GM12878 (cell line): ENCODE measurements at regions of chr12 and their contacts with region 1.

Region 1: GRCh38 chr12:1795785-1796514 is 24.4 kb upstream of the LRTM2 start:
- DNase-seq: peak; percentile 73
- ATAC-seq: peak; percentile 96
- H3K4me3 ChIP-seq: peak overlapping the region; percentile 62
- H3K27ac ChIP-seq: peak overlapping the region; percentile 62
- H3K4me1 ChIP-seq: peaks cover 7% of the 10 kb centered on the region
- H3K27me3 ChIP-seq: no peaks in the 10 kb centered on the region
- CTCF ChIP-seq: peak; percentile 81 to 97 (median 92); a peak in 5 of 6 replicates
- EP300 ChIP-seq: no peak
- POLR2A ChIP-seq: peak; percentile 90
- RAD21 ChIP-seq: peak; percentile 78

Region 2: GRCh38 chr12:1661553-1662335 is 134.2 kb before region 1 on chr12:
- CTCF ChIA-PET with region 1: interaction called, 434 read pairs
- POLR2A ChIA-PET with region 1: no interaction called
- RAD21 ChIA-PET with region 1: interaction called, 234 read pairs
- SMC1A ChIA-PET with region 1: interaction called, 9 read pairs
- in situ Hi-C with region 1: no loop called
- intact Hi-C with region 1: no loop called
- DNase-seq: peak; percentile 43
- ATAC-seq: peak; percentile 96
- H3K4me3 ChIP-seq: peak overlapping the region; percentile 67; the same call in 1 of the 2 replicates
- H3K27ac ChIP-seq: no peak overlapping the region
- H3K4me1 ChIP-seq: no peaks in the 10 kb centered on the region
- H3K27me3 ChIP-seq: no peaks in the 10 kb centered on the region
- CTCF ChIP-seq: no peak
- EP300 ChIP-seq: no peak
- POLR2A ChIP-seq: peak; percentile 80
- RAD21 ChIP-seq: no peak

Region 3: GRCh38 chr12:1698638-1699214 is 97.2 kb before region 1 on chr12:
- CTCF ChIA-PET with region 1: interaction called, 37 read pairs
- POLR2A ChIA-PET with region 1: no interaction called
- RAD21 ChIA-PET with region 1: interaction called, 16 read pairs
- SMC1A ChIA-PET with region 1: interaction called, 32 read pairs
- in situ Hi-C with region 1: no loop called
- intact Hi-C with region 1: loop called (anchors 5 kb)
- DNase-seq: no peak
- ATAC-seq: 0 out of 3 replicates have a peak, but pooled peaks have one; percentile 11
- H3K4me3 ChIP-seq: no peak overlapping the region
- H3K27ac ChIP-seq: no peak overlapping the region
- H3K4me1 ChIP-seq: no peaks in the 10 kb centered on the region
- H3K27me3 ChIP-seq: no peaks in the 10 kb centered on the region
- CTCF ChIP-seq: peak in 1 of 3 experiments; percentile 24; a peak in 1 of 6 replicates
- EP300 ChIP-seq: no peak
- POLR2A ChIP-seq: no peak
- RAD21 ChIP-seq: 0 out of 2 replicates have a peak, but pooled peaks have one; percentile 1

Region 4: DNA sequence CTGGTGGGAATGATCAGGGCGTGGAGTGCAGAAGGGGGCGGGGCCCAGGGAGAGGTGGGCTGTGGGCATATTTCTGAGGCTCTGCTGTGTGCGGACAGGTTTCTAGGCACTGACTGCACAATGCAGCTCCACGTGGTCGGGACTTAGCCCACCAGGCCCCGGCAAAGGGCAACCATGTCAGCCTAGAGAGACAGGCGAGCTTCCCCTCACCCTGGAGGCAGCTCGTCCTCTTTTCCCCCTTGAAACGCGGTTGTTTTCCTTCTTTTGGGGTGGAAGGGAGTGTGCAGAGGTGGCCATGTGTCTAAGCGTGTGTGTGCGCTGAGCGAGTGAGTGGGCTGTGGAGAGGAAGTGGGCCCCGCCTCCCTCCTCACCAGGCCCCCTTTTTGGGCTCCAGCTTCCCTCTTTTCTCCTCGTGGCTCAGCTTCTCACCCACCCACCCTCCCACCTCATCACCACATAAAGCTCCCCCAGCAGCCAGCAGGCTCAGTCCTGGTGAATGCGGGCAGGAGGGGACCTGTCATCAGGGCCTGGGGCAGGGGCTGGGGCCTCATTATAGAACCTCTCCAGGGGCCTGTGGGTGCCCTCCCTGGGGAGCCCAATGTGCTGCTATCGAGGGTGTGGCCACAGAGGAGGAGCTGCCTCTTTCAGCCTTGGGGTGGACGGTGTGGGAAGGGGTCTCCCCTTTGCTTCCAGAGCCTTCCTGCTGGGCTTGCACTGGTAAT is 46.4 kb after region 1 on chr12:
- CTCF ChIA-PET with region 1: no interaction called
- POLR2A ChIA-PET with region 1: no interaction called
- RAD21 ChIA-PET with region 1: no interaction called
- SMC1A ChIA-PET with region 1: no interaction called
- in situ Hi-C with region 1: no loop called
- intact Hi-C with region 1: no loop called
- DNase-seq: no peak
- ATAC-seq: no peak
- H3K4me3 ChIP-seq: no peak overlapping the region
- H3K27ac ChIP-seq: no peak overlapping the region
- H3K4me1 ChIP-seq: no peaks in the 10 kb centered on the region
- H3K27me3 ChIP-seq: peaks cover 3 to 7% of the 10 kb centered on the region in 2 experiments
- CTCF ChIP-seq: no peak
- EP300 ChIP-seq: no peak
- POLR2A ChIP-seq: no peak
- RAD21 ChIP-seq: no peak

Region 5: GRCh38 chr12:1932264-1932777 is 136.4 kb after region 1 on chr12:
- CTCF ChIA-PET with region 1: interaction called, 3 read pairs
- POLR2A ChIA-PET with region 1: no interaction called
- RAD21 ChIA-PET with region 1: interaction called, 4 read pairs
- SMC1A ChIA-PET with region 1: interaction called, 109 read pairs
- in situ Hi-C with region 1: loop called (anchors 5 kb)
- intact Hi-C with region 1: loop called (anchors 2 kb)
- DNase-seq: no peak
- ATAC-seq: peak; percentile 17; the same call in 2 of the 3 replicates
- H3K4me3 ChIP-seq: no peak overlapping the region
- H3K27ac ChIP-seq: no peak overlapping the region
- H3K4me1 ChIP-seq: peaks cover 18% of the 10 kb centered on the region
- H3K27me3 ChIP-seq: no peaks in the 10 kb centered on the region; a peak in 1 of 4 replicates
- CTCF ChIP-seq: no peak
- EP300 ChIP-seq: no peak
- POLR2A ChIP-seq: no peak
- RAD21 ChIP-seq: no peak

Region 6: DNA sequence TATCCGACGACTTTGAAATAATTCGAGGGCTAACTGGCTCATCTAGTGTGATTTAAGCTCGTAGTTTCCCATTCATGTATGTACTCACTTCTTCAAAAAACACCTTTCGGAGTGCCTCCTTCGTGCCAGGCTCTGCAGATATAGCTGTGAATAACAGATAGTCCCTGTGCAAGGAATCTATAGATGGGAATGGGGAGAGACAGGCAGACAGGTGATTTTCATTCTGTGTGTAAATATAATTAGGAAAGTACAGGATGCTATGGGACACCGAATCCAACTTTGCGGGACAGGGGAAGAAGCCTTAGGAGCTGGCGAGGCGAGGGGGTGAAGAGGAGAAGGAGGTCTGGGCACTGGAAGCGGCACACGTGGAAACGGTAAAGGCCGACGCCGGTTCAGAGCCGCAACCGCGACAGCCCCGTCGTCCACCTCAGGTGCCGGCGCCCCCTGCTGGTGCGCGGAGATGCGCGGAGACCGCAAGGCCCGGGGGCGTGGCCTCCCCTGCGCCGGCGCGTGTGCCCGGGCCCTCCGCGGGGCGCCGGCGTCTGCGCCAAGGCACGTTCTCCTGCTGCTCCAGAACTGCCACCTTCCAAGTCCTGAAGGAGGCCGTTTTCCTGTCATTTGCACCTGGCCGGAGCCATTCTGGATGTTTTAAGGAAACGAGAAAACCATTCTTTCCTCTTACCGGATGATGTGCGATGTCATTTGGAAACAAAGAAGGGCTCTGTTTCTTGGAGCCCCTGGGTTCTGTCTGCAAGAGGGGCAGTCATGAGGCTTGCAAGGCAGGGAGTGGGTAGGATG is 238.9 kb after region 1 on chr12:
- CTCF ChIA-PET with region 1: interaction called, 9 read pairs
- POLR2A ChIA-PET with region 1: no interaction called
- RAD21 ChIA-PET with region 1: interaction called, 3 read pairs
- SMC1A ChIA-PET with region 1: interaction called, 6 read pairs
- in situ Hi-C with region 1: no loop called
- intact Hi-C with region 1: loop called (anchors 2 kb)
- DNase-seq: peak; percentile 12
- ATAC-seq: peak; percentile 100
- H3K4me3 ChIP-seq: peak overlapping the region; percentile 34; the same call in 1 of the 2 replicates
- H3K27ac ChIP-seq: no peak overlapping the region
- H3K4me1 ChIP-seq: 0 out of 2 replicates have a peak, but pooled peaks cover 3% of the 10 kb centered on the region
- H3K27me3 ChIP-seq: peaks cover 3 to 6% of the 10 kb centered on the region in 2 experiments
- CTCF ChIP-seq: peak; percentile 85 to 93 (median 86)
- EP300 ChIP-seq: no peak
- POLR2A ChIP-seq: peak; percentile 40; the same call in 1 of the 2 replicates
- RAD21 ChIP-seq: peak; percentile 69